ENCODE measurements at regions of chr10 and their contacts with region 1.

Region 1: GRCh38 chr10:94439275-94439861 is 37.0 kb downstream of the TBC1D12 start:
- DNase-seq: no peak
- ATAC-seq: no peak
- H3K4me3 ChIP-seq: no peak overlapping the region
- H3K27ac ChIP-seq: no peak overlapping the region
- H3K4me1 ChIP-seq: no peaks in the 10 kb centered on the region
- H3K27me3 ChIP-seq: no peaks in the 10 kb centered on the region
- CTCF ChIP-seq: no peak

Region 2: GRCh38 chr10:94279835-94280709 is 159.3 kb before region 1 on chr10:
- CTCF ChIA-PET with region 1: interaction called, 5 read pairs
- POLR2A ChIA-PET with region 1: no interaction called
- intact Hi-C with region 1: loop called (anchors 5 kb)
- DNase-seq: peak; percentile 50
- ATAC-seq: peak; percentile 60
- H3K4me3 ChIP-seq: no peak overlapping the region
- H3K27ac ChIP-seq: no peak overlapping the region
- H3K4me1 ChIP-seq: peaks cover 11% of the 10 kb centered on the region
- H3K27me3 ChIP-seq: no peaks in the 10 kb centered on the region
- CTCF ChIP-seq: peak; percentile 85

Region 3: GRCh38 chr10:94362360-94363250 is 76.8 kb before region 1 on chr10 and contains the start of gene NOC3L:
- CTCF ChIA-PET with region 1: interaction called, 6 read pairs
- POLR2A ChIA-PET with region 1: no interaction called
- intact Hi-C with region 1: loop called (anchors 5 kb)
- DNase-seq: peak; percentile 92
- ATAC-seq: peak; percentile 96
- H3K4me3 ChIP-seq: peak within 1 kb of the TSS; percentile 92
- H3K27ac ChIP-seq: peak within 1 kb of the TSS; percentile 61
- H3K4me1 ChIP-seq: peaks cover 16% of the 10 kb centered on the region
- H3K27me3 ChIP-seq: no peaks in the 10 kb centered on the region
- CTCF ChIP-seq: peak; percentile 67
- total RNA-seq, gene NOC3L: 19.4 and 23.1 TPM in 2 replicates